ENCODE measurements at regions of chr10 and their contacts with region 1.

Region 1: GRCh38 chr10:60032723-60033122 is 126.4 kb upstream of the CCDC6 start:
- H3K4me3 Mint-ChIP-seq: no peak overlapping the region
- H3K27ac Mint-ChIP-seq: peak overlapping the region; percentile 66
- H3K4me1 Mint-ChIP-seq: peaks cover 35% of the 10 kb centered on the region
- H3K27me3 Mint-ChIP-seq: no peaks in the 10 kb centered on the region

Region 2: DNA sequence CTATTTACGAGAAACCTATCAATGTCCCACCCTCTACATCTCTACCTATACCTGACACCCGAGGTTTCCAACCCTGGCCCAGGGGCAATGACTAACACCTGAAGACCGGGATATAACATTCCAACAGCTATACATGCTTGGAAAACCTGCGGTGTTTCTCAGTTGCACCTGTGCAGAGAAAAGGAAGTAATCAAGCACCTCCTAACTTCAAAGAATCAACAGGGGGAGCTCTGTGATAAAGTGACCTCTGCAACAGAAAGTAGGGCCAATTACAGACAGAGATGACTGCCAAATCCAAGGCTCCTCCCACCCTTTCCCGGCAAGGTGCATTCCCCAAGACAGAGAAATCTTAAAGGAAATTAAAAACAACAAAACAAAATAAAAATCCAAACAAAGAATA is 167.6 kb before region 1 on chr10:
- intact Hi-C with region 1: loop called (anchors 5 kb)
- H3K4me3 Mint-ChIP-seq: no peak overlapping the region
- H3K27ac Mint-ChIP-seq: no peak overlapping the region
- H3K4me1 Mint-ChIP-seq: peaks cover 39% of the 10 kb centered on the region
- H3K27me3 Mint-ChIP-seq: no peaks in the 10 kb centered on the region

Region 3: DNA sequence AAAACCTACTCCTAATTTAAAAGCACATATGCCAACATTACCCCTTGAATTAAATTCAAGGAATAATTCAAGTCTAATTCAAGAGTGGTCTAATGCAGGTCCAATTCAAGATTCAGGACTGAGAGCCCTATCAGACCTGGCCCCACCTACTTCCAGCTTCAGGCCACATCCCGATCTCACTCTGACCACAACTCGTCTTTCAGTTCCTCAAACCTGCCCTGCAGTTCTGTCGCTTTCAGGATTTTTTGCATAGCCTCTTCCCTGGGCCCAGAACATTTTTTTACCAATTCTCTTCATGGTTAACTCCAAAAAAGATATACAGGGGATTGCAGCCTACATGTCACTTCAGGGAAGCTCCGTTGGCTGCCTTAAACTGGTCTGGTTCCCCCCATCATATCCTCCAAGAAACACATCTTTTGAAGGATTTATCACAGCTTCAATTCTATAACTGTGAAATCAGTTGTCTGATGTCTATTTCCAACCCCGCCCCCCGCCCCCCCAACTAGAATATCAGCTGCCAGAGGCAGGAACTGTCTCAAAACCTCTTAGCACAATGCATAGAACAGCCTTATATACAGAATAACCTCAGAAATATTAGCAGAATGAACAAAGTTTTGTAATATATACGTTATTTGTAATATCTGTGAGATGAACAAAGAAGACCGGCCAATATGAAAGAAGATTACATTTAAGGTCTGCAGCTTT is 147.1 kb before region 1 on chr10:
- intact Hi-C with region 1: no loop called
- H3K4me3 Mint-ChIP-seq: peak overlapping the region; percentile 13
- H3K27ac Mint-ChIP-seq: peak overlapping the region; percentile 70
- H3K4me1 Mint-ChIP-seq: peaks cover 84% of the 10 kb centered on the region
- H3K27me3 Mint-ChIP-seq: no peaks in the 10 kb centered on the region

Measured in dendritic cell treated with granulocyte-macrophage colony-stimulating factor and Interleukin-4, amounts not matched to agents 40 ng/mL and 50 ng/mL, for 4 days (primary cell).